ENCODE measurements at regions of chr3 and their contacts with region 1.

Region 1: GRCh38 chr3:18398448-18398847 is 26.7 kb downstream of the SATB1 start:
- DNase-seq: no peak
- H3K4me3 ChIP-seq: no peak overlapping the region
- H3K4me3 Mint-ChIP-seq: no peak overlapping the region
- H3K27ac ChIP-seq: no peak overlapping the region
- H3K27ac Mint-ChIP-seq: peak overlapping the region in 6 of 7 donors; percentile 37 to 73 (median 56)
- H3K4me1 ChIP-seq: peaks cover 31% of the 10 kb centered on the region
- H3K4me1 Mint-ChIP-seq: peaks cover 34 to 79% (median 57%) of the 10 kb centered on the region in 4 donors
- H3K27me3 ChIP-seq: no peaks in the 10 kb centered on the region
- H3K27me3 Mint-ChIP-seq: no peaks in the 10 kb centered on the region

Region 2: DNA sequence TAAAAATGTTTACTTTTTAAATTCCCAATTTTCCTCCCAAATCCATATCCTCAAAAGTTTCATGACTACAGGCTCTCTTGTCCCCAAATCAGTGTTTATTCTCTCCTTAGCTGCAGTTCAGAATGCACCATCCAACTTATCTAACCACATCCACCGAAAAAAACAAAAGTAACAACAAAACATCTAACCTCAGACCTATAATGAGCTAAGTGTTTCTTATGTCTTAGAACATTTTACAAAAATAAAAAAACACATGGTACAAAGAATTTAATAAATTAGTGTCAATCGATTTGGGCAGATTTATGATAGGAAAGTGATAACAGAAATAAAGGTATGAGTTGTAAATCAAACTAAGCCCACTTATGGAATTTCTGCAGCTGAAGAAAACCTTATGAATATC is 13.1 kb after region 1 on chr3:
- CTCF ChIA-PET with region 1: interaction called, 6 read pairs
- POLR2A ChIA-PET with region 1: interaction called, 9 read pairs
- intact Hi-C with region 1: loop called (anchors 2 kb)
- DNase-seq: peak in 4 of 5 donors; percentile 32 to 51 (median 42)
- H3K4me3 ChIP-seq: no peak overlapping the region
- H3K4me3 Mint-ChIP-seq: peak overlapping the region in 7 of 8 donors; percentile 29 to 67 (median 61)
- H3K27ac ChIP-seq: no peak overlapping the region
- H3K27ac Mint-ChIP-seq: peak overlapping the region; percentile 10 to 79 (median 43)
- H3K4me1 ChIP-seq: peaks cover 50% of the 10 kb centered on the region
- H3K4me1 Mint-ChIP-seq: peaks cover 42 to 81% (median 67%) of the 10 kb centered on the region in 4 donors
- H3K27me3 ChIP-seq: no peaks in the 10 kb centered on the region
- H3K27me3 Mint-ChIP-seq: no peaks in the 10 kb centered on the region

Region 3: DNA sequence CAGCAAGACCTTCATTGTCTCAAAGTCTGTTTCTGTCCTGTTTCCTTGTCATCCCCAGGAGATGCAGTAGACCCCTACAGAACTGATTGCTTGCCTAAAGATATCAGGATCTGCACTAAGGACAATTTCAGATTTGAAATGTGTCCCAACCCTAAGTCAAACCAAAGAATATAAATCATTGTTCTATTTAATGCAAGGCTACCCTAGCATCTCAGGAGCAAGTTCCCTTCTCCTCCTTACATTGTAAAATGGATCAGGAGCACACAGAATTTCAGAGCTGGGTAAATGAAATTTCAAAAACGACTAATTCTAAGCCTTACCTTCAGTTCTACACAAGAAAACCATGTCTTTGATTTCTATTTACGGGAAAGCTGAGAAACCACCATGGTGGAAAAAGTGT is 389.0 kb after region 1 on chr3:
- CTCF ChIA-PET with region 1: no interaction called
- POLR2A ChIA-PET with region 1: no interaction called
- intact Hi-C with region 1: no loop called
- DNase-seq: peak in 1 of 5 donors; percentile 5
- H3K4me3 ChIP-seq: no peak overlapping the region
- H3K4me3 Mint-ChIP-seq: no peak overlapping the region
- H3K27ac ChIP-seq: no peak overlapping the region
- H3K27ac Mint-ChIP-seq: peak overlapping the region in 1 of 7 donors; percentile 40
- H3K4me1 ChIP-seq: no peaks in the 10 kb centered on the region
- H3K4me1 Mint-ChIP-seq: peaks cover 0 to 5% (median 4%) of the 10 kb centered on the region in 4 donors
- H3K27me3 ChIP-seq: no peaks in the 10 kb centered on the region
- H3K27me3 Mint-ChIP-seq: no peaks in the 10 kb centered on the region